ENCODE measurements at regions of chr1 and their contacts with region 1.

Region 1: DNA sequence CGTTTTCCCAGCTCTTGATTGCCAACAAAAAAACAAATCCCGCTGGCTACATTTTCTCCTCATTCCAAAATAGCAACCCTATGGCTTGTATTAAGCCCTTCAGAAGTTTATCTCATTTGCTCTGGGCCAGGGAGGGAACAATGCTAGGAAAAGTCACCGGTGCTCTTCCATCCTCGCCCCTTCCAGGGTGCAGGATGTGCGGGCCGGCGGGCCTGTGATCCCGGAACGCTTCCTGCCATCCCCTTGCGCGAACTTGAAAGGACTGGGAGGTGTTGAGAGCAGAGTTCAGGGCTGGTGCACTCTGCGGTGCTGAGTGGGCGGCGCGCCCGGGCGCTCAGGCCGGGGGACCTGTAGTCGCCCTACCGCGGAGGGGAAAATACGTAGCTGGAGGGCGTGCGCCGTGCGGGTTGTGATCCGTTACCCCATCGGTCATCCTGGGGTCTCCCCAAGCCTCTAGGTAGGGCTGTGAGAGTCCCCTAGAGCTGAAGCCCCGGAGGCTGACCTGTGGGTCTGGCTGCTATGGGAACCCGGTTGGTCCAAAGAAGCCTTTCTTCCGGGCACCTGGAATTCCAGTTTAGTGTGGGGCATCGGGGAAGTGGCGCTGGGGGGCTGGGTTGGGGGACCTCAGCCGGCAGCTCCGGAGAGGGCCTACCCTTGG is 13.1 kb downstream of the NR5A2 start:
- DNase-seq: no peak
- ATAC-seq: peak; percentile 46
- H3K4me3 ChIP-seq: peak overlapping the region; percentile 59 to 75
- H3K27ac ChIP-seq: peak overlapping the region; percentile 85
- H3K4me1 ChIP-seq: 0 out of 2 replicates have a peak, but pooled peaks cover 5% of the 10 kb centered on the region
- H3K27me3 ChIP-seq: peaks cover 5% of the 10 kb centered on the region
- CTCF ChIP-seq: no peak

Region 2: DNA sequence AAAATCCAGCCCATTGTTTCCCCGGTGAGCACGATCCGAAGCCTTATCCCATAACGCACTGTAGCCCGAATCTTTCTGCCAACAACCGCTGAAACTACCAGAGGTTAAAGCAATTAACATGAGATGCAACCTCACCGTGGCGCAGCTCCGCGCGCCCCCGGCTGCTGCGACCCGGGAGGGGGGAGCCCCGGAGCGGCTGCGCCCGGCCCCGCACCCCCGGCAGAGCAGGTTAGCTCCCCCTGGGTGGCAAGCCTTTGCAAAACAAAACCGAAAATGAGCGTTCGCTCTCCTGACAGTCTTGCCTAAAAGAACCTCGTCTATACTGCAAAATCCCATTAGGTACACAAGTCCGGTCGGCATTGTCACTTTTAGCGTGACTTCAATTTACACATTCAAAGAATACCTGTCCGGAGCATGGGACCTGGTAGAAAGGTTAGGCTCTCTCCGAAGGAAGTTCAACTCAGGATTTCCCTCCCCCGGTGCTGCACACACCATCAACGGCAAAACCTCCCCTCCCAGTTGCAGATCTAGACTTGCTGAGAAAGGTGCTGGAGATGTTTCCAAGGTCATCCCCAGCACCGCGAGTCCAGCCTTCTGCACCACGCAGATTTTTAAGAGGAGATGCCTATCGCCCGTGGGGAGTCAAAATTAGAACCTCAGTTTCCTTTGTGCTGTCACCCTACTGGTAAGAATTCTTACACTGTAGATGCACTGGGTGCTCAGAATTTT is 261.7 kb after region 1 on chr1:
- CTCF ChIA-PET with region 1: no interaction called
- POLR2A ChIA-PET with region 1: no interaction called
- in situ Hi-C with region 1: no loop called
- intact Hi-C with region 1: loop called (anchors 10 kb)
- DNase-seq: no peak
- ATAC-seq: peak; percentile 84
- H3K4me3 ChIP-seq: peak overlapping the region; percentile 70 to 85
- H3K27ac ChIP-seq: peak overlapping the region; percentile 70
- H3K4me1 ChIP-seq: peaks cover 7% of the 10 kb centered on the region; the same call in 1 of the 2 replicates
- H3K27me3 ChIP-seq: no peaks in the 10 kb centered on the region
- CTCF ChIP-seq: no peak; the same call in 1 of the 2 replicates